Caco-2 (cell line): ENCODE measurements at regions of chr19 and their contacts with region 1.

Region 1: GRCh38 chr19:38647368-38647965 is at the start of gene ACTN4:
- DNase-seq: peak; percentile 98 to 100
- H3K4me3 ChIP-seq: peak within 1 kb of the TSS; percentile 100
- H3K4me3 Mint-ChIP-seq: peak within 1 kb of the TSS; percentile 90
- H3K27ac Mint-ChIP-seq: peak within 1 kb of the TSS; percentile 88
- H3K4me1 ChIP-seq: peaks cover 30% of the 10 kb centered on the region
- H3K4me1 Mint-ChIP-seq: peaks cover 16% of the 10 kb centered on the region
- H3K27me3 ChIP-seq: no peaks in the 10 kb centered on the region
- H3K27me3 Mint-ChIP-seq: no peaks in the 10 kb centered on the region
- CTCF ChIP-seq: no peak
- total RNA-seq, gene ACTN4: 605 and 658 TPM in 2 replicates

Region 2: DNA sequence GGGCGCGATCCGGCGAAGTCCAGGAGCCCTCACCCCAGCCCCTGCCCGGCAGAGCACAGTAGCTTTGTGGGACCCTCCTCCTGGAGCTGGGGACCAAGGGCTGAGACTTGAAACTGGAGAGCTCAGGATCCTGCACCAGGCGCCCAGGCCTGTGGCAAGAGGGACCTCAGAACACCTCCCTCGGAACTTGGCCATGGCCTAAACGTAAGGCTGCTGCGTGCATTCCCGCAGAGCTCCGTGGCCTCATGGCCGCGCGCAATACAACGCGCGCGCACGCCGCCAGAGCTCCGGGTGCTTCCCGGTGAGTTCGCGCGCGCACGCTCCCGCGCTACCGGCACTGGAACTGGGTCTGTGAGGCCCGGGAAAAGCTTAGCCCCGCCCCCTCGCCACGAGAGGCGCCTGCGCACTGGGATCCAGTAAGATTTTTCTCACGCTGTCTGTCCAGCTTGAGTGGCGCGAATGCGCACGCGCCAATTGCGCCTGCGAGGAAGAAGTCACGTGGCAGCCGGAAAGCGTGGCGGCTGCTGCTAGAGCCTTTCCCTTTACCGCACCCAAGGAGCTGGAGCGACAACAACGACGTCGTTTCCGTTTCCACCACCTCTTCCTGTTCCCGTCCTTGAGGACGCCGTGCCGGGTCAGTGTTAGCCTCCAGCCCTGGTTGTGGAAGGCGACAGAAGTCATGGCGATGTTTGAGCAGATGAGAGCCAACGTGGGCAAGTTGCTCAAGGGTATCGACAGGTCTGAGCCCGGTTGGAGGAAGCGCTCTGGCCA is 28.7 kb before region 1 on chr19 and contains the start of gene EIF3K:
- CTCF ChIA-PET with region 1: interaction called, 3 read pairs
- POLR2A ChIA-PET with region 1: interaction called, 31 read pairs
- intact Hi-C with region 1: no loop called
- DNase-seq: peak; percentile 99 to 100
- H3K4me3 ChIP-seq: peak within 1 kb of the TSS; percentile 81
- H3K4me3 Mint-ChIP-seq: peak within 1 kb of the TSS; percentile 99
- H3K27ac Mint-ChIP-seq: peak within 1 kb of the TSS; percentile 99
- H3K4me1 ChIP-seq: no peaks in the 10 kb centered on the region
- H3K4me1 Mint-ChIP-seq: peaks cover 7% of the 10 kb centered on the region
- H3K27me3 ChIP-seq: no peaks in the 10 kb centered on the region
- H3K27me3 Mint-ChIP-seq: no peaks in the 10 kb centered on the region
- CTCF ChIP-seq: no peak
- total RNA-seq, gene EIF3K: 354 and 380 TPM in 2 replicates

Region 3: GRCh38 chr19:38658462-38659306 is 11.2 kb after region 1 on chr19:
- CTCF ChIA-PET with region 1: no interaction called
- POLR2A ChIA-PET with region 1: interaction called, 35 read pairs
- intact Hi-C with region 1: loop called (anchors 2 kb)
- DNase-seq: peak; percentile 76 to 81
- H3K4me3 ChIP-seq: no peak overlapping the region
- H3K4me3 Mint-ChIP-seq: peak overlapping the region; percentile 62
- H3K27ac Mint-ChIP-seq: peak overlapping the region; percentile 98
- H3K4me1 ChIP-seq: peaks cover 100% of the 10 kb centered on the region
- H3K4me1 Mint-ChIP-seq: peaks cover 78% of the 10 kb centered on the region
- H3K27me3 ChIP-seq: no peaks in the 10 kb centered on the region
- H3K27me3 Mint-ChIP-seq: no peaks in the 10 kb centered on the region
- CTCF ChIP-seq: no peak

Region 4: GRCh38 chr19:38683393-38684080 is 36.1 kb after region 1 on chr19:
- CTCF ChIA-PET with region 1: interaction called, 9 read pairs
- POLR2A ChIA-PET with region 1: interaction called, 25 read pairs
- intact Hi-C with region 1: loop called (anchors 1 kb)
- DNase-seq: peak; percentile 96 to 98
- H3K4me3 ChIP-seq: no peak overlapping the region
- H3K4me3 Mint-ChIP-seq: peak overlapping the region; percentile 57
- H3K27ac Mint-ChIP-seq: peak overlapping the region; percentile 95
- H3K4me1 ChIP-seq: peaks cover 70% of the 10 kb centered on the region
- H3K4me1 Mint-ChIP-seq: peaks cover 81% of the 10 kb centered on the region
- H3K27me3 ChIP-seq: no peaks in the 10 kb centered on the region
- H3K27me3 Mint-ChIP-seq: no peaks in the 10 kb centered on the region
- CTCF ChIP-seq: no peak